ENCODE measurements at regions of chr6 and their contacts with region 1.

Region 1: DNA sequence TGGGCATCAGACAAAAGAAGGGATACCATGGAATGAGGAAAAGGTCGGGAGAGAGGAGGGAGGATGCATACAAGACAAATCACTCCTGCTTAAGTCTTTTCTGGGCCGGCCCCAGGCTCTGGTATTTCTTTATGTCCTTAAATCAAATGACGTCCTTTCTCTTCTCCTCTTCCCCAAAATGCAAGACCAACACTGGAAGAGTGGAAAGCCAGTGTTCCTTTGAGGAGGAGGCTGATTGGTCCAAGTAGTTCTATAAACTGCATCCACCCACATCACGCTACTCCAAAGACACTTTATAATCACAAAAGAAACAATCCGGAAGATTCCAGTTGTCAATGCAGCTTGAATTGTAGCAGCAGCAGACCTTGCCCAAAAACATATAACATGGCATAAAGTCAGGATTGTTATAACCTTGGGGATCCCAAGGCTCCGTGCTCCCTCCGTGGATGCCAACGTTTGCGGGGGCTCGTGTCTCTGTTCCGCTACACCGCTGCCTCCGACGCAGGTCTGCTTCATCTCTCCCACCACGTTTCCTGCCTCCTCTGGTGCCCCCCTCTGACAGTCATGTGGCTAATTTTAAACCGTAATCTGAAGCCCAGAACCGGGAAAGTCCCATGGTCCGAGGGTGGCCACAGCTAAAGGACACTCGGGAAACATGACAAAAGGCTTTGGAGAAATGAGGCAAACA is 47.1 kb downstream of the MCUR1 start:
- DNase-seq: peak; percentile 47
- ATAC-seq: no peak
- H3K4me3 Mint-ChIP-seq: peak overlapping the region; percentile 63
- H3K27ac Mint-ChIP-seq: peak overlapping the region; percentile 65
- H3K4me1 Mint-ChIP-seq: peaks cover 40% of the 10 kb centered on the region
- H3K27me3 Mint-ChIP-seq: no peaks in the 10 kb centered on the region

Region 2: DNA sequence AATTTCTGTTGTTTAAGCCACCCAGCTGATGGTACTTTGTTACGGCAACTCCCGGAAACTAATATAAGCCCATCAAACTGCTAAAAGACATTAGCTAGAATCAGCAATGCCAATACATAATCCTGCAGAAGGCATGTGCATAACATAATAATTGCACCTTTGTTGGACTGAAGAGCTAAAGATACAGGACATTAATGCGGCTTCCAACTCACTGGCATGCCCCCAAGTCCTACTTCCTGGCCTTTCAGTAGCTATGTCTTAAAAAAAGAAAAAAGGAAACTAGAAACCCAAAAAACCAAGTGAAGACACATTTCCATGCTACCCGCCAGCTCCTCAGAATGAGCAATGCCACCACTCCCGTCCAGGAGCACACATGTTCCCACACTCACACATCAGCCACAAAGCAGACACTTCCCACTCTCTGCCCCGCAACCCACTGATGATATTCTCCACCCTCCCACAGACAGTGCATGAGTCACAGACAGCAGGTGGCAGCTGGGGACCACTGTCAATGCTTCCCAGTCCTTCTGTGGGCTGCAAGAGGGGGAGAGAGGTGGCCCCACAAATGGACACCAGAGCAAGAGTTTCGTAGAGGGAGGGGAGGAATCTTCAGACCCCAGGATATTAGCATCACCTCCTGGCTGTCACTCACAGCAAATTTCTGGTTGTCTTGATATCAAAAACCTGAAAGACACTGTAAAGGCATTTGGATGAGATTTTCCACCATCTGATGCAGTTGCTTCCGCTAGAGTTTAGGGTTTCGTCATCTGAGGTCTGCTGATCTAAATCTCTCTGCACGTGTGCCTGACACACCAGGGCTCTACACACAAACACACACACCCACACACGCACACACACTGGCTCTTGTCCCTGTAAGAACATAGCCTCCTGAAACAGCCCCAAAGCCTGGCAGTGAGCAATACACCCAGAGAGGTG is 312.7 kb before region 1 on chr6:
- CTCF ChIA-PET with region 1: no interaction called
- POLR2A ChIA-PET with region 1: interaction called, 3 read pairs
- intact Hi-C with region 1: loop called in 1 of 2 experiments (anchors 1 kb)
- DNase-seq: peak; percentile 88
- ATAC-seq: peak; percentile 66
- H3K4me3 Mint-ChIP-seq: peak overlapping the region; percentile 36
- H3K27ac Mint-ChIP-seq: peak overlapping the region; percentile 95
- H3K4me1 Mint-ChIP-seq: peaks cover 63% of the 10 kb centered on the region
- H3K27me3 Mint-ChIP-seq: no peaks in the 10 kb centered on the region

Region 3: GRCh38 chr6:13666194-13667105 is 100.8 kb before region 1 on chr6:
- CTCF ChIA-PET with region 1: no interaction called
- POLR2A ChIA-PET with region 1: no interaction called
- intact Hi-C with region 1: no loop called
- DNase-seq: peak; percentile 33
- ATAC-seq: peak; percentile 79
- H3K4me3 Mint-ChIP-seq: no peak overlapping the region
- H3K27ac Mint-ChIP-seq: peak overlapping the region; percentile 73
- H3K4me1 Mint-ChIP-seq: peaks cover 88% of the 10 kb centered on the region
- H3K27me3 Mint-ChIP-seq: no peaks in the 10 kb centered on the region

Region 4: DNA sequence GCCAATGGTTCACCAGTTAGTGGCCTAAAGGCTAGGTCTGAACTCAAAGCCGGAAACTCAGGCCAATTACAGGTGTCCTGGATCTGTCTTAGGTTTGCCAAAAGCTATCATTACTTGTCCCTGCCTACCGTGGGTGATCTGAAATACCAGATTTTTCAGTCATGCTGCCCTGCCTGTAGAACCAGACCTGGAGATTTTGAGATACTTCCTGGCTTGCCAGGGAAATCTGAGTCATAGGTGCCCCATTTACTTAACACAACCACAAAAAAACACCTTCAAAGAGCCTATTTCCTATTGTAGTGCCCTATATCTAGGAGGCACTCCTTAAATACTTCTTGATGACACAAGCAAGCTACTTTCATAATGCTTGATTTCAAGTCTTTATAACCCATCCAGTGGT is 41.7 kb before region 1 on chr6:
- CTCF ChIA-PET with region 1: interaction called, 3 read pairs
- POLR2A ChIA-PET with region 1: no interaction called
- intact Hi-C with region 1: loop called in 1 of 2 experiments (anchors 2 kb)
- DNase-seq: peak; percentile 52
- ATAC-seq: peak; percentile 91
- H3K4me3 Mint-ChIP-seq: no peak overlapping the region
- H3K27ac Mint-ChIP-seq: peak overlapping the region; percentile 72
- H3K4me1 Mint-ChIP-seq: peaks cover 29% of the 10 kb centered on the region
- H3K27me3 Mint-ChIP-seq: no peaks in the 10 kb centered on the region

Region 5: DNA sequence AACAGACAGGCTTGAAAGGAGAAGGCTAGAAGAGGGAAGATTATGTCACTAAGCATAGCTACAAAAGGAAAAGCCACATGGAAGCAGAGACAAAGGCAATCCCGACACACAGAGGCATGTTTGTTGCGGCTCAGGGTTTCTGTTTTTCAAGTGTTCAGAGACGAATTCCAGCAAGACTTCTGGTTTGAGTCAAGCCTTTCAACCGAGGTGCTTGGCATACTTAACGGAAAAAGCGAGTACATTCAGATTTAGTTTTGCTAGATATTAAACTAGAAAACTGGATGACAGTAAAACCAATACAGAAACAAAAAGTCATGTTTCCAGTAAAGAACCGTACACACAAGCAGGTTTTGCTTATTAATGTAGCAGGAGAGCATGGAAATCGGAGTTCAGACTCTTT is 19.9 kb after region 1 on chr6:
- CTCF ChIA-PET with region 1: interaction called, 3 read pairs
- POLR2A ChIA-PET with region 1: no interaction called
- intact Hi-C with region 1: loop called in 1 of 2 experiments (anchors 1 kb)
- DNase-seq: peak; percentile 61
- ATAC-seq: peak; percentile 73
- H3K4me3 Mint-ChIP-seq: peak overlapping the region; percentile 7
- H3K27ac Mint-ChIP-seq: peak overlapping the region; percentile 88
- H3K4me1 Mint-ChIP-seq: peaks cover 37% of the 10 kb centered on the region
- H3K27me3 Mint-ChIP-seq: no peaks in the 10 kb centered on the region

Region 6: GRCh38 chr6:13814176-13814937 is 47.1 kb after region 1 on chr6 and contains the start of gene MCUR1:
- CTCF ChIA-PET with region 1: no interaction called
- POLR2A ChIA-PET with region 1: no interaction called
- intact Hi-C with region 1: loop called in 1 of 2 experiments (anchors 2 kb)
- DNase-seq: peak; percentile 92
- ATAC-seq: peak; percentile 87
- H3K4me3 Mint-ChIP-seq: peak within 1 kb of the TSS; percentile 85
- H3K27ac Mint-ChIP-seq: peak within 1 kb of the TSS; percentile 87
- H3K4me1 Mint-ChIP-seq: peaks cover 27% of the 10 kb centered on the region
- H3K27me3 Mint-ChIP-seq: no peaks in the 10 kb centered on the region
- total RNA-seq, gene MCUR1: 37.9 to 59.3 TPM

Measured in activated CD4-positive, alpha-beta T cell treated with anti-CD3 and anti-CD28 coated beads for 36 hours (primary cell).